Right lobe of liver (tissue), 6 donors: ENCODE measurements at regions of chr4 and their contacts with region 1.

Region 1: DNA sequence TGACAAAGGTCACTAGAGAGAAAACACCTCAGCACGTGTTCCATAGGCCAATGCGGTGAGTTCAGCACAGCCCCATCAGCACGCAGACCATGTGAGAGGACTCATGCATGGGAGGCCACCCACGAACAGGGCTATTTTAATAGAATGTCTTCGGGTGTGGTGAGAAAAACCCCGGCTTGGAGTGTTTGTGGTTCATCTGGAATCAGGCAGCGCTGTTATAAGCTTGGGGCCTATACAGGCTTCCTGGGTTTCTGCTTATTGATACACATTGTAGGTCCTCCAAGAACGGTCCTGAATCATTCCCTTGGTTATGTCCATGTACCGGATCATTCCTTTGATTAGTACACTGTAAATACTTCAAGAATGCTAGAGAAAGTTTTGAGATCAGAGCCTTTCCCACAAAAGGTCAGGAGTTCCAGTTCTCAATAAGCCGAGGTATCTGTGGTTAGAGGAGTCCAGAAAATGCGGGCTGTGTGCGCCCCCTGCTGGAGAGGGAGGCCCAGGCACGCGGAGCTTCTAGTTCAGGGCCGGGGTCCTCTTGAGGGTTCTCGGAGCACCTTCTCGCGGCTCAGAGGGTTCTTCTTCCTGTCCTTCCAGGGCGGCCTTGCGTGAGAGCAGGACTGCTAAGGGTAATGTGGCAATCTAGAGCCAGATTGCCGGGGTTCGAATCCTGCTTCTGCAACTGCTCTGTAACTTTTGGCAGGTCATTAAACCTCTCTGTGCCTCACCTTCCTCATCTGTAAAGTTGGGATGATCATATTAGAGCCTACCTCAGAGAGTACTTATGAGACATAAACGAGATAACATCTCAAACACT is 51.8 kb downstream of the TLR10 start:
- DNase-seq: peak; percentile 83 to 84 (median 84)
- ATAC-seq: peak; percentile 92 to 97 (median 95)
- H3K4me3 ChIP-seq: no peak overlapping the region
- H3K27ac ChIP-seq: no peak overlapping the region
- H3K4me1 ChIP-seq: peaks cover 0 to 3% (median 0%) of the 10 kb centered on the region in 4 donors
- H3K27me3 ChIP-seq: no peaks in the 10 kb centered on the region
- CTCF ChIP-seq: peak; percentile 93 to 99 (median 98)
- POLR2A ChIP-seq: no peak

Region 2: DNA sequence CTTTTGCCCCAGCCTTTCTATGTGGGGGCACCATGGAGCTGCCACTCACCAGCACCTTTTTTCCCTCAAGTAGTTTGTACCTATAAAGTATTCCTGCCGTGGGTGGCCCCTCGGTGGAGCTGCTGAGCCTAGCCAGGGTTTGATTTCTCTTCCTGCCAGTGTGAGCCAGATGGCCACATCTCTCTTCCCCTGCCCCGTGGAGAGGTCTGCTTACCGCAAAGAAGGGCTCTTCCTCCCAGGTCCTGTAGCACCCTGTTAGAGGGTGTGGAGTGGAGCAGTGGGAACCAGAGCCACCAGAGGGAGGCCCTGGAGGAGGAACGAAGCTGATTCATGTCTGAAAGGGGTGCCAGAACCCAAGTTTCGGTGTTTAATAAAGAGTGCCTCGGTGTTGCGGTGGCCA is 675.5 kb before region 1 on chr4:
- intact Hi-C with region 1: loop called in 1 of 2 experiments (anchors 10 kb)
- DNase-seq: no peak
- ATAC-seq: peak; percentile 3 to 18 (median 11)
- H3K4me3 ChIP-seq: no peak overlapping the region
- H3K27ac ChIP-seq: peak overlapping the region in 2 of 3 donors; percentile 34 to 59
- H3K4me1 ChIP-seq: no peaks in the 10 kb centered on the region
- H3K27me3 ChIP-seq: no peaks in the 10 kb centered on the region
- CTCF ChIP-seq: no peak
- POLR2A ChIP-seq: no peak

Region 3: GRCh38 chr4:38204339-38205035 is 526.6 kb before region 1 on chr4:
- intact Hi-C with region 1: loop called in 1 of 2 experiments (anchors 10 kb)
- DNase-seq: no peak
- ATAC-seq: no peak
- H3K4me3 ChIP-seq: no peak overlapping the region
- H3K27ac ChIP-seq: peak overlapping the region in 1 of 3 donors; percentile 87
- H3K4me1 ChIP-seq: peaks cover 0 to 43% (median 9%) of the 10 kb centered on the region in 4 donors
- H3K27me3 ChIP-seq: no peaks in the 10 kb centered on the region
- CTCF ChIP-seq: no peak
- POLR2A ChIP-seq: no peak

Region 4: DNA sequence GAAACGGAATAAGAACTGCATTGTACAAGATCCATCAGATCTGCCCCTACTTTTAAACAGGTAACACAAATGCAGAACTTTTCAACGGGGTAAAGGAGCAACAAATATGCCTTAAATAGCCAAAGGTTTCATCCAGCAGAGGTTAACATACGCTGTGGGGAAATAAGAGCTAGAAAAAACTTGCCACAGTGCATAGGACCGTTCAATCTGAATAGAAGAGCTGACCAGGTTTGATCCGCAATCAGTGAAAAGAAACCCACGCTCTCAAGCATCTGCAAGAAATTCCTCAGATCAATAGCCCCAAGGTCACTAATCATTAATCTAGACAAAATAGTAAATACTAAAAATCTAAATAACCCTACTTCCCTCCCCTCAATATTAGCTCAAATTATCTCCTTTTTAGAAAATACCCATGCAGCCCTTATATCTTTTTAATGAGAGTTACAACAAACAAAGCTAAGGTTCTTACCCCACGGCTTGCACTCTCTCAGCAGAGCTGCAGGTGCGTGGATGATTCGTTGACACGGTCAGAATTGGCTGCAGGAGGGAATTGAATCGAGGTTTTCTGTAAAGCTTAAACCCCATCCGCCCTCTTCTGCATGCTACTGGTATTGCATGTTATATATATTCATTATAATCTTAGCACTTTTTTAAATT is 51.5 kb after region 1 on chr4 and contains the start of gene TLR10:
- intact Hi-C with region 1: no loop called
- DNase-seq: peak in 1 of 3 donors; percentile 63
- ATAC-seq: peak; percentile 82 to 90 (median 83)
- H3K4me3 ChIP-seq: no peak within 1 kb of the TSS
- H3K27ac ChIP-seq: no peak within 1 kb of the TSS
- H3K4me1 ChIP-seq: peaks cover 0 to 8% (median 0%) of the 10 kb centered on the region in 4 donors
- H3K27me3 ChIP-seq: no peaks in the 10 kb centered on the region
- CTCF ChIP-seq: peak; percentile 58 to 76 (median 68)
- POLR2A ChIP-seq: no peak
- total RNA-seq, gene TLR10: 0.16 to 0.68 (median 0.39) TPM in 4 of 6 experiments, not detected in the others